AG04450 (cell line): ENCODE measurements at regions of chr16 and their contacts with region 1.

Region 1: GRCh38 chr16:14586637-14587305 is 43.3 kb downstream of the PARN start:
- DNase-seq: no peak
- H3K4me3 ChIP-seq: no peak overlapping the region
- H3K27ac ChIP-seq: no peak overlapping the region
- H3K27me3 ChIP-seq: no peaks in the 10 kb centered on the region
- CTCF ChIP-seq: no peak

Region 2: DNA sequence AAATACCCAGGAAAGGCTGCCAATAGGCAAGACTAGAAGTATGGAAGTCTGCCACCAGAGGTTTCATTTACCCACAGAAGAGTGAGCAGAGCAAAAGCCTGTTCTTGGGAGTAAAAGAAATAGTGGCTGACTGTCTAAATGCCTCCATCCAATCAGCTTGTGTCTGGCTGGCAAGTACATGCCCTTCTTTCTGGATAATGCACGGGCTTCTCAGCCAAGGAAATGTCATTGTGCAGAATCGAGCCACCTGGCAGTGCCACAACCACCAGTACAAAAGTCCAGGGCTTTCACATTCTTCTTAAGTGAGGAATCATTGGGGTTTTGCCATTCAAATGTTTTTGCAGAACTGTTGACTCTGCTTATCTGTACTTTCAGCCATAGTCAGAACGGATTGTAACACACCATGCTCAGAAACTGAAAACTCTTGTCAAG is 676.9 kb before region 1 on chr16:
- CTCF ChIA-PET with region 1: interaction called, 10 read pairs
- POLR2A ChIA-PET with region 1: no interaction called
- DNase-seq: peak; percentile 47
- H3K4me3 ChIP-seq: no peak overlapping the region
- H3K27ac ChIP-seq: no peak overlapping the region
- H3K27me3 ChIP-seq: peaks cover 11% of the 10 kb centered on the region
- CTCF ChIP-seq: no peak

Region 3: GRCh38 chr16:14562691-14563491 is 23.9 kb before region 1 on chr16:
- CTCF ChIA-PET with region 1: no interaction called
- POLR2A ChIA-PET with region 1: no interaction called
- DNase-seq: no peak
- H3K4me3 ChIP-seq: no peak overlapping the region
- H3K27ac ChIP-seq: no peak overlapping the region
- H3K27me3 ChIP-seq: no peaks in the 10 kb centered on the region
- CTCF ChIP-seq: peak; percentile 30